WTC11 (cell line): ENCODE measurements at regions of chr11 and their contacts with region 1.

Region 1: GRCh38 chr11:72471005-72471898 is 36.9 kb upstream of the CLPB start:
- DNase-seq: peak; percentile 72
- ATAC-seq: peak; percentile 97
- H3K4me3 Mint-ChIP-seq: peak overlapping the region; percentile 27
- H3K27ac Mint-ChIP-seq: peak overlapping the region; percentile 28; the same call in 1 of the 2 replicates
- H3K4me1 Mint-ChIP-seq: peaks cover 7% of the 10 kb centered on the region
- H3K27me3 Mint-ChIP-seq: peaks cover 16% of the 10 kb centered on the region
- CTCF ChIP-seq: peak; percentile 58

Region 2: GRCh38 chr11:72308226-72309073 is 162.8 kb before region 1 on chr11:
- CTCF ChIA-PET with region 1: no interaction called
- POLR2A ChIA-PET with region 1: no interaction called
- DNase-seq: no peak
- ATAC-seq: no peak
- H3K4me3 Mint-ChIP-seq: no peak overlapping the region
- H3K27ac Mint-ChIP-seq: no peak overlapping the region
- H3K4me1 Mint-ChIP-seq: no peaks in the 10 kb centered on the region
- H3K27me3 Mint-ChIP-seq: no peaks in the 10 kb centered on the region
- CTCF ChIP-seq: no peak

Region 3: DNA sequence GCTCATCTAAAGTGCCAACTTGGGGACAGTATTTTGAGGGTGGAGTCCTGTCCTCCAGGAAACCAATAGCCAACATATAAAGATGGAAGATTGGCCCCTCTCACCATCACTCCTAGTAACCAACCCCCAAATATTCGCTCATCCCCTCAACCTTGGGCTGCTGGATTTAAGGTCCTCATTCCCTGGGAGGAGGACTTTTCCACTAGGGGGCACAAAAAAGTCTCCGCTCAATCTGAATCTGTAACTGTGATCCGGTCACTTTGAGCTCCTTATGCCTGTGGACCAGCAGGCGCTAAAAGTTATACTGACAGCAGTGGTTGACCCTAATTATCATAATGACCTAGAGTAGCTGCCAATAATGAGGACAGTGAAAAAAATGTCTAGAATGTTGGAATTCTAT is 16.5 kb before region 1 on chr11:
- CTCF ChIA-PET with region 1: interaction called, 141 read pairs
- POLR2A ChIA-PET with region 1: no interaction called
- DNase-seq: peak; percentile 17
- ATAC-seq: peak; percentile 67; the same call in 1 of the 2 replicates
- H3K4me3 Mint-ChIP-seq: no peak overlapping the region
- H3K27ac Mint-ChIP-seq: no peak overlapping the region
- H3K4me1 Mint-ChIP-seq: 0 out of 2 replicates have a peak, but pooled peaks cover 2% of the 10 kb centered on the region
- H3K27me3 Mint-ChIP-seq: peaks cover 8% of the 10 kb centered on the region
- CTCF ChIP-seq: no peak

Region 4: DNA sequence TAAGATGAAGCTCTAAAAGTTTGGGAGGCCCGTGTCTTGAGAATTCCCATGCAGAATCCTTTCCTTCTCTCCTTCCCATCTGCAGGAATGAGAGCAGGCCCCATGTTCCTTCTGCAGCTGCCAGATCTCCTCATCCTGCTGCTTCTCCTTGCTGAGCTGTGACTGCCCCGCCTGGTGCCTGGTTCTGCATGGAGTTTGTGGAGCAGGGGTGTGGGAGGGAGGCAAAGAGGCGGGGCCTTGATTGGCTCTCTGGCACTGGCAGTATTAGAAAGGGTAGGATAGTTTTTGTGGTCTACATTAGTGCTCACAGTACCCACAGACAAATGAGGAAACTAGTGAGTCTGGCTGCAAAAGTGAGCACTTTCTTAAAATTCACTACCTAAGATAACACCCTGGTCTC is 54.2 kb after region 1 on chr11:
- CTCF ChIA-PET with region 1: interaction called, 14 read pairs
- POLR2A ChIA-PET with region 1: no interaction called
- DNase-seq: peak; percentile 29
- ATAC-seq: peak; percentile 96
- H3K4me3 Mint-ChIP-seq: no peak overlapping the region
- H3K27ac Mint-ChIP-seq: no peak overlapping the region
- H3K4me1 Mint-ChIP-seq: no peaks in the 10 kb centered on the region; the same call in 1 of the 2 replicates
- H3K27me3 Mint-ChIP-seq: no peaks in the 10 kb centered on the region
- CTCF ChIP-seq: no peak

Region 5: GRCh38 chr11:72573072-72573854 is 102.0 kb after region 1 on chr11:
- CTCF ChIA-PET with region 1: interaction called, 144 read pairs
- POLR2A ChIA-PET with region 1: no interaction called
- DNase-seq: peak; percentile 78
- ATAC-seq: peak; percentile 96
- H3K4me3 Mint-ChIP-seq: no peak overlapping the region
- H3K27ac Mint-ChIP-seq: no peak overlapping the region
- H3K4me1 Mint-ChIP-seq: peaks cover 4% of the 10 kb centered on the region; the same call in 1 of the 2 replicates
- H3K27me3 Mint-ChIP-seq: peaks cover 21% of the 10 kb centered on the region
- CTCF ChIP-seq: peak; percentile 60

Region 6: DNA sequence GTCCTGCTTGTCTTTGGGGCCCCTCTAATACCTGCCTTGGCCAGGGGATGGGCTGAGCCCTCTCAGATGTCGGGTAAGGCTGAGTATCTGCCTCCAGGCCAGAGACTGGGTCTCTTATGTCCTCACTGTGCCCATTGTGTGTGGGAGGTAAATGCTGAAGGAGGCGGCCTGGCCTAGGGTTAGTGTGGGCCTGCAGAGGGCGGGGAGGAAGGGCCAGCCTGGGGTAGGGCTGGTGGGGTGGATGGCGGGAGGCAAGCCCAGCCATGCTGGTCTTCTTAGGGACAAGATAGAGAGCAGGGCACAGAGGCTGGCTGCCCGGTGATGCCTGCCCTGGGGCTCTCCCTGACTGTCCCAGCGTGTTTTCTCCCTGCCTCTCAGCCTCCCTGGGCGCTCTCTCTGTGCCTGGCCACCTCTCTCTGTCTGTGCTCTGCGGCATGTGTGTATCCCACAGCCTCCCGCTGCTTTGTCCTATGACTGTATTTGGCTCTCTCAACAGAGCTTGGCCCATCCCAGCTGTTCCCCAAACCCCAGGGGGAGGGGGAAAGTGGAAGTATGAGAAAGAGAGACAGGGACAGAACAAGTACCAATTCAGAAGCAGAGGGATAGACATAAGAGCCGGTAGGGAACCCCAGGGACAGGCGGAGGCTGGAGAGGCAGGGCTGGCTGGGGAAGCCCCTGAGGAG is 146.0 kb after region 1 on chr11:
- CTCF ChIA-PET with region 1: interaction called, 10 read pairs
- POLR2A ChIA-PET with region 1: no interaction called
- DNase-seq: no peak
- ATAC-seq: peak; percentile 26
- H3K4me3 Mint-ChIP-seq: no peak overlapping the region
- H3K27ac Mint-ChIP-seq: no peak overlapping the region
- H3K4me1 Mint-ChIP-seq: peaks cover 11% of the 10 kb centered on the region
- H3K27me3 Mint-ChIP-seq: peaks cover 13% of the 10 kb centered on the region
- CTCF ChIP-seq: no peak

Region 7: DNA sequence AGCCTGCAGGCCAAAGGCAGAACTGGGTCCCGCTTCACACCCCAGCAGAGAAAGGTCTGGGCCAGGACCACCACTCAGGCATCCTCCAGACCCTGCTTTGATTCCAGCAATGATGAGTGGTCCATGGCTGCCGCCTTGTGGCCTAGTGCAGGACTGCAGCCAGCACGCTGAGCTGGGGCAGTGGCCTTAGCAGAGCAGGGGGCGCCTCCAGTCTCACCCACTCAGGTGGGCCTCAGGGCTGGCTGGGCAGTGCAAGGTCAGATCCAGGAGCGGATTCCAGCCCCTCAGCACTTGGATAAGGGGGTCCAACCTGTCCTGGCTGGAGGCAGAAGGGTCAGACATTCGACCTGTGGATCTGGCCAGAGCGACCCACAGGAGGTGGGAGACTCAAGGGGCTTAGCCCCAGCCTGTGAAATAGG is 212.5 kb after region 1 on chr11:
- CTCF ChIA-PET with region 1: interaction called, 41 read pairs
- POLR2A ChIA-PET with region 1: no interaction called
- DNase-seq: peak; percentile 92
- ATAC-seq: peak; percentile 80
- H3K4me3 Mint-ChIP-seq: no peak overlapping the region
- H3K27ac Mint-ChIP-seq: no peak overlapping the region
- H3K4me1 Mint-ChIP-seq: peaks cover 9% of the 10 kb centered on the region
- H3K27me3 Mint-ChIP-seq: peaks cover 23% of the 10 kb centered on the region
- CTCF ChIP-seq: peak; percentile 96